Activated T-helper 2 cell treated with anti-CD3 and anti-CD28 coated beads, Interferon-gamma antibody, Interleukin-2, Interleukin-4, amounts not matched to agents 10 μg/mL and 5 μg/mL and 100 μg/mL, durations not matched to agents 14 hours and 24 hours and 36 hours (primary cell): ENCODE measurements at regions of chr4 and their contacts with region 1.

Region 1: DNA sequence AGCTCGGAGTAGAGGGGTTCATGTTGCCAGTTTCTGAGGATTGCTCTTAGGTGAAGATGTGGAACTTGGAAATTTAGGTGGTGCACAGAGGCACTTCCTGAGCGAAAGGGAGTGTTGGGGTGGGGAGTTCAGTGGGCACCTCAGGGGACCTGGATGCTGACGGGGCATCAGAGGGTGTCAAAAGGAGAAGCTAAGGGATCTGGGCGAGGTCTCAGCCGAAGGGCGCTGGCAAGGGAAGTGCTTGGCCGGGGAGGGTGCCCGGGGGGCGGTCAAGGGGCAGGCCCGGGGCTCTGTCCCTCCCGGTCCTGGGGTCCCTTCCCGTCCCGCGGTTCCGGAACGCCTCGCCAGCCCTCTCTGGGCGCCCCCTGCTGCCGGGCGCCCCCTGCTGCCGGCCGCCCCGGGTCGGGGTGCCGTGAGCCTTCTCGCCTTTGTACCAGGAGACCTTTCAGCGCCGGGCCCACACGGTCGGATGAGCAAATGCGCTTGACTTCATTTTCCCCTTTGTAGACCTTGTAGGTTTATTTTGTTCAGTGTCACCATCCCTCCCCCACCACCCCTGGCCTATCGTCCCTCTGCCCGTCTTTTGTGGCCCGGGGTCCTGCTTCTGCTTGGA is 3.0 kb upstream of the PHOX2B start:
- DNase-seq: no peak
- H3K4me3 Mint-ChIP-seq: no peak overlapping the region
- H3K27ac Mint-ChIP-seq: no peak overlapping the region
- H3K4me1 Mint-ChIP-seq: peaks cover 1% of the 10 kb centered on the region
- H3K27me3 Mint-ChIP-seq: peaks cover 80% of the 10 kb centered on the region

Region 2: DNA sequence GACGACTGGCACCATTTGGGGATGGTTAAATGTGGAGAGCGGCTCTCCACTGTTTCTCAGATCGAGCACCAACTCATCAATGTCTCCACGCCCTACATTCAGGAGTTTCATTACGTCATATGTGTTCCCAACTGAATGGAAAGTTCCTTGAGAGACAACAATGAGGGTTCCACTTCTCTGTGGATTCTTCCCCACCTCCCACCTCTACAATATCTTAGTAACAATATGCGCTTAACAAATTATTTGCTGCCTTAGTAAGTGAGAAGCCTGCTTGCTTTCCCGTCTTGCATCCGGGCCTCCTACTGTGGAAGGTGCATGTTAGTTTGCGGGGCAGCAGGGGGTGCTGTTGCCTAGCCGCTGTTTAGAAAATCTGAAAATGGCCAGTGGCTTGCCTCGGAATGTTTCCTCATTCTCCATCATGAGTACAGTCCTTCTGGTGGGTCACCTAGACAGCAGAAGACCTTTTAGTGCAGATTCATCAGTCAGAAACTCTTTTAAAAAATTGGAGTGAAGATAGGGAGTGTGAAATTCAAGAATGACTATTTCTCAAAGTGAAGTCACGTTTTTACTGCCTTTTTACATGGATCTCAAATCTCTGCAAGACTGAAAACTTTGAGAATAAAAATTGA is 58.7 kb before region 1 on chr4:
- intact Hi-C with region 1: loop called (anchors 5 kb)
- DNase-seq: peak; percentile 11
- H3K4me3 Mint-ChIP-seq: no peak overlapping the region
- H3K27ac Mint-ChIP-seq: no peak overlapping the region
- H3K4me1 Mint-ChIP-seq: peaks cover 3% of the 10 kb centered on the region
- H3K27me3 Mint-ChIP-seq: peaks cover 6% of the 10 kb centered on the region

Region 3: DNA sequence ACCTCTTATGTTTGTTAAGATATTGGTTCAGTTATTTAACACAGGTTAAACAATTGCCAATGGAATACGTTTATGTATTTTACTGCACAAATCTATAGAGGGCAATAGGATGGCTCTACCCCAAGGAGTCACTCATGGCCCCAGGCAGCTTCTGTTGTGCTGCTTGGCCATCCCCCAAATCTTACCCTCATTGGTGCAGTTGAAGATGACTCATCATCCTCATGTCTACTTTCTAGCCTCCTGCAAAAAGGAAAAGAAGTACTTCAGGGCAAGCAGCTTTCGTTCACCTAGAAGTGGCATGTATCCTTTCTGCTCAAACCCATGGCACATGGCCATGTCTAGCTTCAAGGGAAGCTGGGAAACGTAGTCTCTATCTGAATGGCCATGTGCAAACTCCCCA is 17.2 kb before region 1 on chr4:
- intact Hi-C with region 1: no loop called
- DNase-seq: no peak
- H3K4me3 Mint-ChIP-seq: no peak overlapping the region
- H3K27ac Mint-ChIP-seq: no peak overlapping the region
- H3K4me1 Mint-ChIP-seq: no peaks in the 10 kb centered on the region
- H3K27me3 Mint-ChIP-seq: peaks cover 5% of the 10 kb centered on the region

Region 4: GRCh38 chr4:41865306-41865980 is 113.9 kb after region 1 on chr4:
- intact Hi-C with region 1: loop called (anchors 2 kb)
- DNase-seq: no peak
- H3K4me3 Mint-ChIP-seq: no peak overlapping the region
- H3K27ac Mint-ChIP-seq: no peak overlapping the region
- H3K4me1 Mint-ChIP-seq: peaks cover 10% of the 10 kb centered on the region
- H3K27me3 Mint-ChIP-seq: peaks cover 71% of the 10 kb centered on the region

Region 5: DNA sequence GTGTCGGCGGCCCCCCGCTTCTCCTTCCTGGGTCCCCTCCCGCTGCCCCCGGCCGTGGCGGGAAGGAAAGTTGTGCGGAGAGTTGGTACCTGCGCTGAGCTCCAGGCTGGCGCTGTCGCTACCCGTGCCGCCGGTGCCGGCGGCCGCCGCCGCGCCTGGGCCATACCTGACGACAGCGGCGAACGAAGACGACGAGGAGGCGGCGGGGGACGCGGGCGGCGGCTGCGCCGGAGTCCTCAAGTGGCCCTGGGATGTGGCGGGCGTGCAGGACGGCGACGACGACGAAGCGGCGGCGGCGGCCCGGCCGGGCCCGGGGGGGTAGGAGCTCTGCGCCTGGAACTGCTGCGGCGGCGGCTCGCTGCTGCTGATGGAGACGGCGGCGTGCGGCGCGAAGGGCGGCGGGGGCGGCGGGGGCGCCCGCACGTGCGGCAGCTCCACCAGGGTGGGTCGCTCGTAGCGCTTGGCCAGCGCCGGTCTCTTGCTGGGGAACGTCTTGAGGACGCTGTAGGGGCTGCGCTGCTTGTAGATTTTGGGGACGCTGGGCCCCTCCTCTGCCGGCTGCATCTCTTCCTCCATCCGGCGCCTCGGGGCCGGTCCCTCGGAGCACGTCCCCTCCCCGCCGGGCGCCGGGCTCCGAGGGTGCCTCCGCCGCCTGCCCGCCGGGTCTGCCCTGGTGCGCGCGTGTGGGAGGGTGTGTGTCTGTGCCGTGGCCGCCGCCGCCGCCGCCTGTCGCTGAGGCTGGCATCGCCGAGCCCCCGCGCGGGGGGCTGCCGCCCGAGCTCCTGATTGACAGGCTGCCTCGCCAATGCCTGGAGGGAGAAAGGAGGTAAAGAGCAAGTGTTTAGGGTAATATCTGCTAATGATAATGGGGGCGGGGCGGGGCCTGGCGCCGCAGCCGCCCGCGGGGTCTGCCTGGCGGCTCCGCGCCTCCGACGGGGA is 400.3 kb after region 1 on chr4:
- intact Hi-C with region 1: loop called (anchors 5 kb)
- DNase-seq: no peak
- H3K4me3 Mint-ChIP-seq: peak overlapping the region; percentile 49
- H3K27ac Mint-ChIP-seq: no peak overlapping the region
- H3K4me1 Mint-ChIP-seq: peaks cover 6% of the 10 kb centered on the region
- H3K27me3 Mint-ChIP-seq: peaks cover 56% of the 10 kb centered on the region

Region 6: GRCh38 chr4:42396752-42397634 is 645.4 kb after region 1 on chr4 and contains the start of gene SHISA3:
- intact Hi-C with region 1: loop called (anchors 5 kb)
- DNase-seq: peak; percentile 20
- H3K4me3 Mint-ChIP-seq: peak within 1 kb of the TSS; percentile 79
- H3K27ac Mint-ChIP-seq: no peak within 1 kb of the TSS
- H3K4me1 Mint-ChIP-seq: peaks cover 15% of the 10 kb centered on the region
- H3K27me3 Mint-ChIP-seq: peaks cover 65% of the 10 kb centered on the region
- total RNA-seq, gene SHISA3: 0.80 and 1.2 TPM in 2 replicates